ENCODE measurements at regions of chrX and their contacts with region 1.

Region 1: DNA sequence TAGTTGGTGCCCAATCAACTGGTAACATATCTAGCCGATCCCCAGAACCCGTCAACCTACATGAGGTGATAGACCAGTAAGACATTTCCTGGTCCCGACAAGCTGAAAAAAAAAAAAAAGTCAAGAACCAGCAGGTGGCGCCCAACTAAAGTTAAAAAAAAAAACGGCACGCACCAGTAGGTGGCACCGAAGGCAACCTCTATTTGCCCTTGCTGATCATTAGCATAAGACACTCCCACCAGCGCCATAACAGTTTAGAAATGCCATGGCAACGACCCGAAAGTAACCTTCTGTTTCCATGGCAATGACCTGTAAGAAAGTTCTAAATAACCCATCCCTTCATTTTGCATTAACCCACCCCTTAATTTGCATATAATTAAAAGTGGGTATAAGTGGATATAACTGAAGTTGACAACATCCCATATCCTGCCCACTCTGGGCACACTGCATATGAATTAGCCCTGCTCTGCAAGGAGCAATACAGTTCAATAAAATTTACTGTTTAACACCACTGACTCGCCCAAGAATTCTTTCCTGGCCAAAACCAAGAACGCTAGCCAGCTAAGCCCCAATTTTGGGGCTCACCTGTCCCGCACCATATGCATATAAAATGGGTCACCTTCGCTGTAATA is 83.9 kb upstream of the SPANXB1 start:
- DNase-seq: peak; percentile 8
- H3K4me3 ChIP-seq: no peak overlapping the region
- H3K27ac ChIP-seq: no peak overlapping the region
- H3K27me3 ChIP-seq: no peaks in the 10 kb centered on the region
- CTCF ChIP-seq: peak; percentile 61

Region 2: DNA sequence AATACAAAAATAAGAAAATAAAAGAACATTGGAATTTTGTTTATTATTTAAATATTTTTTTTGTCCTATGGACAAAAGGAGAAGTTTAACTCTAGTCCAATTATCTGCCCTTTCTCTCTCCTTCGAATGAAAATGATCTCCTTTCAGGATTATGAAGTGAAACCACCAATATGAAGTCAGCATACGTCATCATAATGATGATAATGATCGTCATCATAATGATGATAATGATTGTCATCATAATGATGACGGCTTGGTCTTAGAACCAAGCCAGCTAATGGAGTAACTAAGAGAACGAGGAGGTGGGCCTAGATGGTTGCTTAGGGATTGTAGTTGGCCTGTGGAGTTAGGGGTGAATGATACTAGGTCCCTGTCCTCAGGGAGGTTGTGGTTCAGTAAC is 230.8 kb before region 1 on chrX:
- CTCF ChIA-PET with region 1: no interaction called
- POLR2A ChIA-PET with region 1: no interaction called
- DNase-seq: no peak
- H3K4me3 ChIP-seq: no peak overlapping the region
- H3K27ac ChIP-seq: no peak overlapping the region
- H3K27me3 ChIP-seq: no peaks in the 10 kb centered on the region
- CTCF ChIP-seq: no peak

Region 3: DNA sequence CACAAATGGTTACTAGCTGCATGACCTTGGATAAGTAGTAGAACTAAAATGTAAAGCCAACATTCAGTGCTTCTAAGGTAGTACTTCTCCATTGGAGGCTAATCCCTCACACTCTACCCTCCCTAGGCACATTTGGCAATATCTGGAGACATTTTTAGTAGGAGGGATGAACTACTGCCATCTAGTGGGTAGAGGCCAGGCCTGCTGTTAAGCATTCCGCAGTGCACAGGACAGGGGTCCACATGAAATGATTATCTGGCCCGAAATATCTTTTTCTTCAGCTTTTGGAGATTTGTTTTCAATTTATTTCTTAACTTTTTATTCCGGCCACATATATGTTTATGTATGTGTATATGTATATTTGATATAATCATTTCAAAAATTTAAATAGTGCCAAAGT is 359.8 kb after region 1 on chrX:
- CTCF ChIA-PET with region 1: interaction called, 28 read pairs
- POLR2A ChIA-PET with region 1: no interaction called
- DNase-seq: no peak
- H3K4me3 ChIP-seq: no peak overlapping the region
- H3K27ac ChIP-seq: no peak overlapping the region
- H3K27me3 ChIP-seq: no peaks in the 10 kb centered on the region
- CTCF ChIP-seq: peak; percentile 63